Gastrocnemius medialis (tissue), 4 donors: ENCODE measurements at regions of chr12 and their contacts with region 1.

Region 1: DNA sequence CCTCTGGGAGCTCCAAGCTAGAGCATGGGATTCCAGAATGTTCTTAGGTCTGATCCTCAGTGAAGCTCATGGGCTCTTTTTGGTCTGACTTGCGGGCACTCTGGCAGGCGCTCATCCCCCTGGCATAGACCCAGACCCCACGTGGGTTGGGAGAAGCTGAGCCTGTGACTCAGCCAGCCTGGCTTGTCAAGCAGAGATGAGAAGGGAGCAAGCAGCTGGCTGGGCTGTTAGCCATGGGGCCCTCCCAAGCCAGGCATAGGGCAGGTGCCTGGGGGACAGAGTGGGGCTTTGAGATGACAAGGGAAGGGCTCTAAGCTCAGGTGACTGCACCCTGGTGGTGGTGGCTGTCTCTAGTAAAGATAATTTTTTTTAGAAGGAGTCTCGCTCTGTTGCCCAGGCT is 80.3 kb upstream of the NOS1 start:
- DNase-seq: peak; percentile 95 to 100
- ATAC-seq: peak; percentile 75 to 77
- H3K4me3 ChIP-seq: peak overlapping the region in 1 of 4 donors; percentile 48
- H3K27ac ChIP-seq: peak overlapping the region; percentile 88 to 98 (median 94)
- H3K4me1 ChIP-seq: peaks cover 36 to 39% of the 10 kb centered on the region in 2 donors
- H3K27me3 ChIP-seq: no peaks in the 10 kb centered on the region
- CTCF ChIP-seq: peak; percentile 34 to 68 (median 53)
- POLR2A ChIP-seq: peak; percentile 16 to 28

Region 2: GRCh38 chr12:117412465-117413188 is 29.1 kb before region 1 on chr12:
- in situ Hi-C with region 1: no loop called
- intact Hi-C with region 1: loop called (anchors 1 kb)
- DNase-seq: peak; percentile 85 to 98
- ATAC-seq: peak; percentile 83 to 85
- H3K4me3 ChIP-seq: peak overlapping the region in 1 of 4 donors; percentile 23
- H3K27ac ChIP-seq: peak overlapping the region; percentile 79 to 89 (median 84)
- H3K4me1 ChIP-seq: peaks cover 48 to 57% of the 10 kb centered on the region in 2 donors
- H3K27me3 ChIP-seq: no peaks in the 10 kb centered on the region
- CTCF ChIP-seq: peak in 1 of 5 experiments; percentile 22
- POLR2A ChIP-seq: no peak

Region 3: GRCh38 chr12:117466677-117467362 is 25.1 kb after region 1 on chr12:
- in situ Hi-C with region 1: no loop called
- intact Hi-C with region 1: no loop called
- DNase-seq: no peak
- ATAC-seq: peak in 1 of 2 donors; percentile 26
- H3K4me3 ChIP-seq: no peak overlapping the region
- H3K27ac ChIP-seq: no peak overlapping the region
- H3K4me1 ChIP-seq: no peaks in the 10 kb centered on the region
- H3K27me3 ChIP-seq: no peaks in the 10 kb centered on the region
- CTCF ChIP-seq: no peak
- POLR2A ChIP-seq: no peak

Region 4: GRCh38 chr12:117518594-117519270 is 77.0 kb after region 1 on chr12:
- in situ Hi-C with region 1: no loop called
- intact Hi-C with region 1: loop called (anchors 2 kb)
- DNase-seq: peak; percentile 75 to 82
- ATAC-seq: peak; percentile 28 to 64
- H3K4me3 ChIP-seq: no peak overlapping the region
- H3K27ac ChIP-seq: peak overlapping the region in 3 of 4 donors; percentile 10 to 74 (median 31)
- H3K4me1 ChIP-seq: peaks cover 18 to 52% of the 10 kb centered on the region in 2 donors
- H3K27me3 ChIP-seq: no peaks in the 10 kb centered on the region
- CTCF ChIP-seq: no peak
- POLR2A ChIP-seq: no peak

Region 5: GRCh38 chr12:117587631-117588287 is 146.0 kb after region 1 on chr12:
- in situ Hi-C with region 1: no loop called
- intact Hi-C with region 1: loop called (anchors 1 kb)
- DNase-seq: peak; percentile 27 to 65
- ATAC-seq: peak; percentile 83 to 91
- H3K4me3 ChIP-seq: peak overlapping the region in 3 of 4 donors; percentile 27 to 33 (median 30)
- H3K27ac ChIP-seq: no peak overlapping the region
- H3K4me1 ChIP-seq: no peaks in the 10 kb centered on the region
- H3K27me3 ChIP-seq: peaks cover 0 to 5% (median 0%) of the 10 kb centered on the region in 3 donors
- CTCF ChIP-seq: peak; percentile 87 to 92 (median 90)
- POLR2A ChIP-seq: no peak